H1 (cell line): ENCODE measurements at regions of chr19 and their contacts with region 1.

Region 1: GRCh38 chr19:35168207-35168606 is 13.7 kb downstream of the FXYD5 start:
- DNase-seq: no peak
- H3K4me3 ChIP-seq: no peak overlapping the region
- H3K27ac ChIP-seq: no peak overlapping the region
- H3K4me1 ChIP-seq: no peaks in the 10 kb centered on the region
- H3K27me3 ChIP-seq: no peaks in the 10 kb centered on the region
- CTCF ChIP-seq: no peak
- EP300 ChIP-seq: no peak
- POLR2A ChIP-seq: no peak
- RAD21 ChIP-seq: no peak

Region 2: DNA sequence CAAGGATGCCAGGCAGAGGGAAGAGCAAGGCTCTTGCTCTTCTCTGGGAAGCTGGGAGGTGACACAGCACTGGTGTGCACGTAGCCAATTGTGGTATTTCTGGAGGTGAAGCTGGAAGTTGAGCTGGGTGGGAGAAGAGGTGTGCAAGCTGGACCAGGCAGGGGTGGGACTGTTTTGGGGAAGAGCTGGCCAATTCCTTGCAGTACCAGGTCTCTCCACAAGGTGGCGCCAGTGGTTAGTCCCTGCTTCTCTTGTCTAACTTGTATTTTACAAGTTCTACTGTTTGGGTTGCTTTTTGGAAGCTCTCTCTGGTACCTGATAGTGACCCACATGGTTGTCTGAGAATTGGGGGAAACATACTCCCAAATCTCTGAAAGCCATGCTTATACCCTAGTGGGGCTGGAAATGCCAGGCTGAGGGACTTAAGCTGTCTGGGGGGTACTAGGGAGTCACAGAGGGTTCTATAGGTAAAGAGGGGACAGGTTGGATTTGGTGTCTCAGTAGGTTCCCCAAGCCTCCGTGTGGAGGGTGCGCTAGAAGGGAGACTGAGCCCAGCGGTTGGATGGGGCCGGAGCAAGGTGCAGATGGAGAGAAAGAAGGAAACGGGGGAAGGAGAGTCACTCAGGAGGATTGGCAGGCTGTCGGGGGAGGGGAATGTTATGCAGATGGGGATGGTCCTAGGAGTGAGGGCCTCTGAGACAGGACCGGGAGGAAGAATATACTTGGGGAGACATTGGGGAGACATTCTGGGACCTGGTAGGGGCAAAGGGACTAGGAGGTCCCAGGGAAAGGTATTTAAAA is 123.7 kb before region 1 on chr19:
- CTCF ChIA-PET with region 1: no interaction called
- POLR2A ChIA-PET with region 1: no interaction called
- DNase-seq: peak in 1 of 2 experiments; percentile 95
- H3K4me3 ChIP-seq: no peak overlapping the region
- H3K27ac ChIP-seq: no peak overlapping the region
- H3K4me1 ChIP-seq: peaks cover 5 to 37% (median 23%) of the 10 kb centered on the region in 4 experiments
- H3K27me3 ChIP-seq: no peaks in the 10 kb centered on the region
- CTCF ChIP-seq: peak; percentile 78 to 99 (median 84)
- EP300 ChIP-seq: no peak
- POLR2A ChIP-seq: no peak
- RAD21 ChIP-seq: peak; percentile 66 to 72

Region 3: DNA sequence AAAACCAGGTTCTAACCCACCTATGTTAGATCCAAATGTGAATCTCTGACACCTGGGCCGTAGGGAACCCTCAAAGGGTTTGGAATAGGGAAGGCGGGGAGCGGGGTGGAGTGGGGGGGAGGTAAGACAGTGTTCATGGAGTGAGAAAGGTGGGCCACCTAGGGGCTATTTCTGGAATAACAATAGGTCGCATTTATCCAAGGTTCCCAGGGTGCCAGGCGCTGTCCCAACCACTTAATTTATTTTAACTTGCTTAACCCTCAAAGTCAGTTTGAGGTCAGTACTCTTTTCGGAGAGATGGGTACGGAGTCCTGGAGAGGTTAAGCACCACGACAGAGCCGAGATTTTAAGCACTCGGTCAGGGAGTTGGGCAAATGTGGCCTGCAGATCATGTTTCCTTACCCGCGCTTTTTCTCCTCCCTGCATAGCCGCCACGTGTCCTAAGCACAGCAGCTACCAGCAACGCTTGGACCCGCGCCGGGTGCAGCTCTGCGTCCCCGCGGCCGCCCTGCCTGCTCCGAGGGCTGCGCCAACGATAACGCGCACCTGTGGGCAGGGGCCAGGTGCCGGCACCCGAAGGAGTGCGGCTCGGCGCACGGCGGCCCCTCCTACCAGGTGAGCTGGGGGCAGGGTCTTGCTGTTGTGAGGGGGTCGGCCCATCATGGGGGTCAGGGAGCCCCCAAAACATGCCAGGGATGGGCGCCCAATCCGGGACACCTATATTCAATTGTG is 77.5 kb before region 1 on chr19:
- CTCF ChIA-PET with region 1: no interaction called
- POLR2A ChIA-PET with region 1: no interaction called
- DNase-seq: peak in 1 of 2 experiments; percentile 80
- H3K4me3 ChIP-seq: peak overlapping the region; percentile 13 to 45 (median 36); a peak in 7 of 8 replicates
- H3K27ac ChIP-seq: no peak overlapping the region
- H3K4me1 ChIP-seq: peaks cover 3 to 14% (median 6%) of the 10 kb centered on the region in 4 experiments; a peak in 6 of 7 replicates
- H3K27me3 ChIP-seq: no peaks in the 10 kb centered on the region
- CTCF ChIP-seq: peak; percentile 38 to 49 (median 40)
- EP300 ChIP-seq: no peak
- POLR2A ChIP-seq: 0 out of 3 replicates have a peak, but pooled peaks of 1 of the 2 experiments have one; percentile 19
- RAD21 ChIP-seq: peak; percentile 52 to 59

Region 4: GRCh38 chr19:35154525-35155406 is 13.4 kb before region 1 on chr19 and contains the start of gene FXYD5:
- CTCF ChIA-PET with region 1: interaction called, 13 read pairs
- POLR2A ChIA-PET with region 1: interaction called, 8 read pairs
- DNase-seq: peak in 1 of 2 experiments; percentile 72
- H3K4me3 ChIP-seq: peak within 1 kb of the TSS; percentile 68 to 80 (median 74)
- H3K27ac ChIP-seq: peak within 1 kb of the TSS; percentile 21; the same call in 1 of the 2 replicates
- H3K4me1 ChIP-seq: peaks cover 4 to 28% (median 19%) of the 10 kb centered on the region in 4 experiments
- H3K27me3 ChIP-seq: peaks cover 0 to 5% (median 3%) of the 10 kb centered on the region in 4 experiments; a peak in 3 of 7 replicates
- CTCF ChIP-seq: peak in 1 of 3 experiments; percentile 3; a peak in 1 of 4 replicates
- EP300 ChIP-seq: no peak
- POLR2A ChIP-seq: no peak
- RAD21 ChIP-seq: no peak
- total RNA-seq, gene FXYD5: 99.0 and 104 TPM in 2 replicates

Region 5: DNA sequence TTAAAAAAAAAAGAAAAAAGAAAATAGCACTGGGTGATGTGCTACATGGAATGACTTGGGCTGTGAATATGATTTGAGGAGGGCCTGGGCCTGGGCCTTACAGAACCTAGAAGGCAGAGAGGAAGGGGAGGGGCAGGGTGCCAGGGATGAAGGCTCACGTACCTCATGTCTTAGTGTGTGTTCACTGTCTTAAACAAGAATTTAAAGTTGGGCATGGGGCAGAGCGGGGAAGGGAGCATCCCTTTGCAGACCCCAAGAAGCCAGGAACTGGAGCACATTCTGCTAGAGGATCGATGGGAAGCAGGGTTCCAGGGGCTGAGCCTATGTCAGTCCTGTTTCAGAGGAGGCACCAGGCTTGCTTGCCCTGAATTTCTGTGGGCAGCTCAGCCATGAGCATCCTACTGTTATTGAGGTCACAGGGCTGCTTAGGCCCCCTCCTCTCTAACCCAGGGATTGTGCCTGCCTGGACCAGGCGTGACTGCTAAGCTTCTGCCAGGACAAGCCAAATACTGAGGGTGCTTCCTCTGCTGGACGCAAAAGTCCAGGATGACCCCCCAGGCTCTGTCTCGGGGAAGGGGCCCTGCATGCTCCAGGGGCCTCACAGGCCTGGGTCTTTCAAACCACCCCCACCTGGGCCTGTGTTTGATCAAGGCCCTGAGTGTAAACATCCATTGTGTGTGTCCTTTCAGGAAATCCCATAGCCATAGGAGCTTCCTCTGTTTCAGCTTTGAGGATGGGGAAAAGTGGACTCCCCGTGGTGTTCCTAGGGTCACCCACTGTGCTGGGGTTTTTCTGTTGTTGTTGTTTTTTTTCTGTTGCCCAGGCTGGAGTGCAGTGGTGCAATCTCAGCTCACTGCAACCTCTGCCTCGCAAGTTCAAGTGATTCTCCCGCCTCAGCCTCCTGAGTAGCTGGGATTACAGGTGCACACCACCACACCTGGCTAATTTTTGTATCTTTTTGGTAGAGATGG is 85.4 kb after region 1 on chr19:
- CTCF ChIA-PET with region 1: no interaction called
- POLR2A ChIA-PET with region 1: no interaction called
- DNase-seq: peak in 1 of 2 experiments; percentile 48
- H3K4me3 ChIP-seq: no peak overlapping the region
- H3K27ac ChIP-seq: peak overlapping the region; percentile 73
- H3K4me1 ChIP-seq: peaks cover 0 to 14% (median 7%) of the 10 kb centered on the region in 4 experiments; a peak in 6 of 7 replicates
- H3K27me3 ChIP-seq: no peaks in the 10 kb centered on the region
- CTCF ChIP-seq: no peak
- EP300 ChIP-seq: peak in 1 of 2 experiments; percentile 63; a peak in 1 of 3 replicates
- POLR2A ChIP-seq: no peak
- RAD21 ChIP-seq: no peak